ENCODE measurements at regions of chr5 and their contacts with region 1.

Region 1: DNA sequence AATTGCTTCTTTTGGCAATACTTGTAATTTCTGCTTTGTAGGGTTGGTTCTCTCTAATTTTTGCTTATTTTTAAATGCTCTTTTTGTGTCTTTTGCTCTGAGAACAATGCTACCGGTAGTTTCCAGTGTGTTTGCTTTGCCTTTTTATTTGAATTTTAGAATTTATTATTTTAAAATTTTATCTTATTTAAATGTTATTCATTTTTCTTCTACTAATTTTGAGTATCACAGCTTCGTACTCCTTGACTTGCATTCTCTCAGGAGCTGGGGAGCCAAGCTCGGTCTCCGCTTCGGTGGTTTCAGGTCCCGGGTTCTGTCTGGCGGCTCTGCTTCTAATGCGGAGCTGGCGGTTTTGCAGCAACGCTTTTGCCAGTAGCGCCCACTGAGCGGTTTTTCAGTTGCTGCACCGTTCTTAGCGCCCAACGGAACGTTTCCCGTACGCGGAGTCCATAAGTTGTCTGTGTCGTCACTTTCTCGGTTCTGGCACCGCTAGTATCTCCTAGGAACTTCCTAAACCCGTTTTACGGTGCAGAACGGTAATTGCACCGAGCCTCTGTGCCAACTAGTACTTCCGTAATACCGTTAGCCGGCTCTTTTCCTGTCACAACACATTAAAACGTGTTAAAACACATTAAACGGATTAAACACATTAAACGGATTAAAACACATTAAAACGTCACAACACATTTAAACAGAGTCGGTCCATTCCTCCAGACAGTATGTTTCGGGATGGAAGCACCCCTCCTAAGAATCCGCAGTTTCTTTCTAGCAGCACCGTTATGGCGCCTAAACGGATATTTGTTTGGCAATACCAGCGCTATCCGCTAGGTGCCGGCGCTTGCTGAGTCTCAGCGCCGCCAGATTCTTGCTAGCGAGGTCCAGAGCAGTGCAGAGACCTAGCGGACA is 45.6 kb downstream of the ANXA2R start:
- DNase-seq: peak; percentile 93
- ATAC-seq: peak; percentile 76
- H3K4me3 ChIP-seq: peak overlapping the region; percentile 80
- H3K27ac ChIP-seq: peak overlapping the region; percentile 100
- H3K4me1 ChIP-seq: no peaks in the 10 kb centered on the region; the same call in 1 of the 2 replicates
- H3K27me3 ChIP-seq: no peaks in the 10 kb centered on the region
- CTCF ChIP-seq: peak; percentile 85
- POLR2A ChIP-seq: no peak; the same call in 1 of the 2 replicates
- RAD21 ChIP-seq: peak; percentile 67

Region 2: DNA sequence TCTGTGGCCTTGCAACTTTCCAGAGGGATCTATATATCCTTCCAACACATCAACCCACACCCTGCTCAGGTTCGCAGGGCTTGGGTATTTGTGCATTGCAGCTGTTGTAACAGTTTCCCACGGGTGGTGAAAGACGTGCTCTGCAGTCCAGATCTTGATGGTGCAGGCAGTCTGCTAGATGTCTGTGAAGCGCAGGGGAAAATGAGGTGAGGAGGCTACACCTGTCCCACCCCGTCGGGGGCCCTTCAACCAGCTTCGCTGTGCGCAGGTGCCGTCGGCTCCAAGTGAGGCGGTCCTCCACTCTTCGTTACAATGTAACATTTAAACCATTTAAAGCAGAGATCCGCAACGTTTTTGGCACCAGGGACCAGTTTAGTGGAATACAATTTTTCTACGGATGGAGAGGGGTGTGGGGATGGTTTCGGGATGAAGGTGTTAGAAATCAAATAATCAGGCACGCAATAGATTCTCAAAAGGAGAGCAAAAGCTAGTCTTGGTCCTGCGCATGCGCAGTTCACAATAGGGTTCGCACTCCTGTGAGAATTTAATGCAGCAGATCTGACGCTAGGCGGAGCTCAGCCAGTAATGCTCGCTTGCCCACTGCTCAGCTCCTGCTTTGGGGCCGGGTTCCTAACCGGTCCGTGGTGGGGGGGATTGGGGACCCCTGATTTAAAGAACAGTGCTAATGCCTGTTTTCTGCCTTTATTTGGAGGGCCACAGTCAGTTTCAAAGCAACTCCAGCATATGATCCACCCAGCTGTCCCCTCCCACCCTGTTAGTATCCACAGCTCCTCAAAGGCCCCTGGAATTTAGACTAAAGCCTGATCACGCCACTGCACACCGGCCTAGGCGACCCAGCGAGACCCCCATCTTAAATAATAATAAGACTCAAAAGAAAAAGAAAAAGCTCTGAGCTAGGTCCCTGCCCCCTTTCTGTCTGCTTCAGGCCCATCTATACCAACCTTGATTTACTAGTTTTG is 85.7 kb before region 1 on chr5:
- CTCF ChIA-PET with region 1: interaction called, 12 read pairs
- POLR2A ChIA-PET with region 1: interaction called, 3 read pairs
- dilution Hi-C with region 1: no loop called
- in situ Hi-C with region 1: loop called (anchors 10 kb)
- intact Hi-C with region 1: loop called (anchors 1 kb)
- DNase-seq: peak; percentile 85
- ATAC-seq: peak; percentile 96
- H3K4me3 ChIP-seq: peak overlapping the region; percentile 50
- H3K27ac ChIP-seq: no peak overlapping the region
- H3K4me1 ChIP-seq: no peaks in the 10 kb centered on the region
- H3K27me3 ChIP-seq: peaks cover 13% of the 10 kb centered on the region
- CTCF ChIP-seq: peak; percentile 83
- POLR2A ChIP-seq: no peak
- RAD21 ChIP-seq: peak; percentile 78

Region 3: GRCh38 chr5:43008369-43009153 is 14.1 kb after region 1 on chr5:
- CTCF ChIA-PET with region 1: interaction called, 3 read pairs
- POLR2A ChIA-PET with region 1: interaction called, 8 read pairs
- dilution Hi-C with region 1: no loop called
- in situ Hi-C with region 1: no loop called
- intact Hi-C with region 1: loop called (anchors 1 kb)
- DNase-seq: peak; percentile 93
- ATAC-seq: peak; percentile 57
- H3K4me3 ChIP-seq: peak overlapping the region; percentile 61
- H3K27ac ChIP-seq: peak overlapping the region; percentile 93
- H3K4me1 ChIP-seq: peaks cover 19% of the 10 kb centered on the region
- H3K27me3 ChIP-seq: no peaks in the 10 kb centered on the region
- CTCF ChIP-seq: 0 out of 2 replicates have a peak, but pooled peaks have one; percentile 7
- POLR2A ChIP-seq: no peak
- RAD21 ChIP-seq: no peak

Region 4: DNA sequence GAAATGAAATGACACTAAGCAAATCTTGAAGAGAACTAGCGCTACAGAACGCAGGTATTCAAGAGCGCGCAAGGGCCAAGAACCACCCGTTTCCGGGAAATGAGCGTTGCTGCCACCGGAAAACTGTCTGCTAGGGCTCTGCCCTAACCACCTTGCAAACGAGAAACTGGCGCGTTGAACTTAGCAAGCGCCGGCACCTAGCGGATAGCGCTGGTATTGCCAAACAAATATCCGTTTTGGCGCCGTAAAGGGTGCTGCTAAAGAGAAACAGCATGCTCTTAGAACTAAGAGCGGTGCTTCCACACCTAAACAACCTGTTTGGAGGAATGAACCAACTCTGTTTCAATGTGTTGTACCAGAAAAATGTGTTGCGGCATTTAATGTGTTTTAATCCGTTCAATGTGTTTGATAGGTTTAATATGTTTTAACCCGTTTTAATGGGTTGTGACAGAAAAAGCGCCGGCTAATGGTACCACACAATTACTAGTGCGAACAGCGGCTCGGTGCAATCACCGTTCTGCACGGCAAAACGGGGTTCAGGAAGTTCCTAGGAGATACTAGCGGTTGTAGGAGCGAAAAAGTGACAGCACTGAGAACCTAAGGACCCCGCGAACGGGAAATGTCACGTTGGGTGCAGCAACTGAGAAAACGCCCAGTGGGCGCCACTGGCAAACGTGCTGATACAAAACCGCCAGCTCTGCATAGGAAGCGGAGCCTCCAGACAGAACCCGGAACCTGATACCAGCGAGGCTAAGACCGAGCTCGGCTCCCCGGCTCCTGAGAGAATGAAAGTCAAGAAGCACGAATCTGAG is 46.0 kb after region 1 on chr5 and contains the start of gene ANXA2R:
- CTCF ChIA-PET with region 1: interaction called, 12 read pairs
- POLR2A ChIA-PET with region 1: interaction called, 16 read pairs
- dilution Hi-C with region 1: no loop called
- in situ Hi-C with region 1: no loop called
- intact Hi-C with region 1: loop called (anchors 1 kb)
- DNase-seq: peak; percentile 97
- ATAC-seq: peak; percentile 52
- H3K4me3 ChIP-seq: peak within 1 kb of the TSS; percentile 95
- H3K27ac ChIP-seq: peak within 1 kb of the TSS; percentile 88
- H3K4me1 ChIP-seq: peaks cover 6% of the 10 kb centered on the region
- H3K27me3 ChIP-seq: no peaks in the 10 kb centered on the region
- CTCF ChIP-seq: peak; percentile 84
- POLR2A ChIP-seq: no peak
- RAD21 ChIP-seq: peak; percentile 76
- total RNA-seq, gene ANXA2R: 1.3 and 1.4 TPM in 2 replicates

Region 5: DNA sequence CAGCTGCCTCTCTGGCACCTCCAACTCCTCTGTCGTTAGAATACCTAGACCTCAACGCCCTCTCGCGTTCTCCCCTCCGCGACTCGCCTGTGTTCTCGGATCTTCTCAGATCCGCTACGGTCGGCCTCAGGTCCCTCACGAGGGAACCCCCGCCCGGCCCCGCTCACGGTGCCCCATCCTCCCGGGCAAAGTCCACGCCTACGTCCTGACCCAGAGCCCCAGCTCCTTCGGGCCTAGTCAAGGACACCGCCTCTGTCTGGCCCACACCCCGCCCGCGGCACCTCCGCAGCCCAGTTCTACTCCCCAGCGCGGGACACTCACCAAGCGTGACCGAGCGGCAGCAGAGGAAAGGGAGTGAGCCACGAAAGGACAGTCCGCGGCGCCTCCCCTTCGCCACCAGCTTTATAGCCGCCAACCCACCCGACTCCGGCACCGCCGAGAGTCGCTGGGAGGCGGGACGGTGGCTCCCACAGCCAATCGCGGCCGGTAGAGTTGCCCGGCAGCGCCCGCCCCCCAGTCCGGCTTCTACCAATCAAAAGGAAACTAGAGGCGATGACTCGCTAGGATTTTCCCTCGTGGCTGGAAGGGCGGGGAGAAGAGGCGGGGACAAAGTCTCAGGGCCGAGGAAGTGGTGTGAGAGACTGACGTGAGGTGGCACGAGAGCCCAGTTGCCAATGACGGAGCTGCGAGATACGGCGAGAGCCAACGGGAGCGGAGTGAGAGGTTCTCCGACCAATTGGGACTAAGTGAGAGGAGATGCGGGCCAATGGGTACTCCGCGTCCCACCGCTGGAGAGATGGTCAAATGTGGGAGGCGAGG is 318.7 kb after region 1 on chr5 and contains the start of gene HMGCS1:
- CTCF ChIA-PET with region 1: no interaction called
- POLR2A ChIA-PET with region 1: no interaction called
- dilution Hi-C with region 1: no loop called
- in situ Hi-C with region 1: no loop called
- intact Hi-C with region 1: loop called (anchors 5 kb)
- DNase-seq: peak; percentile 100
- ATAC-seq: peak; percentile 97
- H3K4me3 ChIP-seq: peak within 1 kb of the TSS; percentile 69
- H3K27ac ChIP-seq: peak within 1 kb of the TSS; percentile 72
- H3K4me1 ChIP-seq: peaks cover 2% of the 10 kb centered on the region; the same call in 1 of the 2 replicates
- H3K27me3 ChIP-seq: no peaks in the 10 kb centered on the region
- CTCF ChIP-seq: 0 out of 2 replicates have a peak, but pooled peaks have one; percentile 2
- POLR2A ChIP-seq: peak; percentile 97
- RAD21 ChIP-seq: no peak
- total RNA-seq, gene HMGCS1: 30.6 and 32.8 TPM in 2 replicates

Measured in IMR-90 (cell line).